Gastrocnemius medialis (tissue), 4 donors: ENCODE measurements at regions of chr16 and their contacts with region 1.

Region 1: GRCh38 chr16:19393226-19394074 is 24.2 kb upstream of the TMC5 start:
- DNase-seq: no peak
- ATAC-seq: no peak
- H3K4me3 ChIP-seq: no peak overlapping the region
- H3K27ac ChIP-seq: no peak overlapping the region
- H3K4me1 ChIP-seq: no peaks in the 10 kb centered on the region
- H3K27me3 ChIP-seq: peaks cover 0 to 9% (median 2%) of the 10 kb centered on the region in 3 donors
- CTCF ChIP-seq: no peak
- POLR2A ChIP-seq: no peak

Region 2: DNA sequence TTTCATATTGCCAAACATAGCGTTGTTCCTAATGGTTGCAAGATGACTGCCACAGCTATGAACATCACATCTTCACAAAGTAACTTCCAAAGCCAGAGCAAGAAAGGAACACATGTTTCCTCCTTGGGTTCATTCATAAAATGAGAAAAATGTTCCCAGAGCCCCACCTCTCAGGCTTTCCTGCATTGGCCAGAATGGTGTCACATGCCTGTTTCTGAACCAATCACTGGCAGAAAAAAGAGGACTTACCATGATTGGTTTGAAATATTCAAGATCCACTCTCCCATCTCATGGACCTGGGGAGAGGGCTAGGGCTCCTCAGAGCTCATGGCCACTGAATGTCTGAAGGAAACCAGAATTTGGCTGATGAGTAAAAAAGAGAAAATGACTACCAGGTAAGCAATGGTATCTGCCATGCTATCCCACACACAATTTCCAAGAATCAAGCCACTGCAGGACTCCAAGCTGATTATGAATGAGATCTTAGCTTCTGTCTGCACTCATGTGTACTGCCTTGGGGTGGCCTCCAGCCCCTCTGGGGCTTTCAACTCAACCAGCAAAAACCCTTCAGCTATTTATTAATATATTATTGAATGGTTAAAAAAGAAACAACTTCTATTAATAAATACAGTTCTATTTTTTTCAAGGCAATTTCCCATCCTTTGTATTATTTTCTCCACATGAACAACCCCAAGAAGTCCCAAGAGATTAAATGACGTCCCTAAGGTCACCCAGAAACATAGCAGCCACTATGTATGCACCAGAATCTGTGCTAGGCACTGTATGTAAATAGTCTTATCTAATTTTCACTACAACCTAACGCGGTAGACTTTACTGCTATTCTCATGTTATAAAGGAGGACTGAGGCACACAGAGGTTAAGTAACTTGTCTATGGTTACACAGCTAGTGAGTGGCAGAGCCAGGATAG is 37.2 kb before region 1 on chr16:
- in situ Hi-C with region 1: no loop called
- intact Hi-C with region 1: no loop called
- DNase-seq: no peak
- ATAC-seq: no peak
- H3K4me3 ChIP-seq: no peak overlapping the region
- H3K27ac ChIP-seq: no peak overlapping the region
- H3K4me1 ChIP-seq: no peaks in the 10 kb centered on the region
- H3K27me3 ChIP-seq: no peaks in the 10 kb centered on the region
- CTCF ChIP-seq: no peak
- POLR2A ChIP-seq: no peak

Region 3: DNA sequence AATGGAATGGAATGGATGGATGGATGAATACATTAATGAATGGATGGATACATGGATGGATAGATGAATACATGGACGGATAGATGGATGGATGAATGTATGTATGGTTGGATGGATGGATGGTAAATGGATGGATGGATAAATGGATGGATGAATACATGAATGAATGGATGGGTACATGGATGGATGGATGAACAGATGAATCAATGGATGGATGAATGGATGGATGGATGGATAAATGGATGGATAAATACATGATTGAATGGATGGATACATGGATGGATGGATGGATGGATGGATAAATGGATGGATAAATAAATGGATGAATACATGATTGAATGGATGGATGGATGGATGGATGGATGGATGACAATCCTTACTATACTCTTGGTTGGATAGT is 50.2 kb after region 1 on chr16:
- in situ Hi-C with region 1: loop called in 1 of 4 experiments (anchors 5 kb)
- intact Hi-C with region 1: no loop called
- DNase-seq: no peak
- ATAC-seq: no peak
- H3K4me3 ChIP-seq: no peak overlapping the region
- H3K27ac ChIP-seq: no peak overlapping the region
- H3K4me1 ChIP-seq: no peaks in the 10 kb centered on the region
- H3K27me3 ChIP-seq: no peaks in the 10 kb centered on the region
- CTCF ChIP-seq: no peak
- POLR2A ChIP-seq: no peak

Region 4: GRCh38 chr16:19583665-19584300 is 190.3 kb after region 1 on chr16:
- in situ Hi-C with region 1: no loop called
- intact Hi-C with region 1: no loop called
- DNase-seq: no peak
- ATAC-seq: peak; percentile 50 to 58
- H3K4me3 ChIP-seq: no peak overlapping the region
- H3K27ac ChIP-seq: no peak overlapping the region
- H3K4me1 ChIP-seq: no peaks in the 10 kb centered on the region
- H3K27me3 ChIP-seq: no peaks in the 10 kb centered on the region
- CTCF ChIP-seq: peak in 4 of 5 experiments; percentile 28 to 77 (median 51)
- POLR2A ChIP-seq: no peak